Esophagus squamous epithelium (tissue), 5 donors: ENCODE measurements at regions of chr15 and their contacts with region 1.

Region 1: DNA sequence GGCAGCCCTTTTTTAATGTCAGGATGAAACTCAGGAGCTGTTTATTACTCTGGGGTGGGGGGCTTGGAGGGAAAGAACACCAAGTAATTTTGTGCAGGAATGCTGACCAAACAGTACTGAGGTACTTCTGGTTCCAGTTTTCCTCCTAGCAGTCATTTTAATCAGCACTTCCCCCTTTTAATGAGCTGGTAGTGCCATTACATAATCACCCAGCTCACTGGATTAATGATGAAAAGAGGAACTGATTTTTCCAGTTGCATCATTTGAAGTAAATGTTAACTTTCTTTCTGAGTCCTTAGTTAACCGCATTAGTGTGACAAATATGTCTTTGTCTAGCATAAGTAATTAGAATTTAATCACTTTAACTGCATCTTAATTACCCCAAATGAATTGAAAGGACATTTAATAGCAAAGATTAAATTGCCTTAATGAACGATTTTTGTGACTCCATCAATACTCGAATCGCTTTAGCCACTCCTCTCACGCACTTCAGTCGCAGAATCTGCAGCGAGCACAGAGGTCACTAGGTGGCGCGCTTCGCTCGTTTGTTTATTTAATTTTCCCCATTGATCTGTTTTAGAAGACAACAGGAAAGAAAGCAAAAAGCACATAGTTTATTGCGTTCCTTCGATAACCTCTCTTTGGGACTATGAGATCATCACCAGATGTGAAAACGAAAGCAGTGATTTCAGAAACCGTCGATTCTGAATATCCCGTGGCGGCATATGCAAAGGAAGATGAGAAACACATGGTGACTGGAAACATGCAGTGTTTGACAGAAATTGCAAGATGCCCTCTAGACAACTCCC is 9.8 kb downstream of the ONECUT1 start:
- DNase-seq: no peak
- H3K4me3 ChIP-seq: peak overlapping the region in 1 of 4 donors; percentile 44
- H3K27ac ChIP-seq: no peak overlapping the region
- H3K4me1 ChIP-seq: peaks cover 7 to 39% (median 9%) of the 10 kb centered on the region in 3 donors
- H3K27me3 ChIP-seq: peaks cover 10 to 98% (median 27%) of the 10 kb centered on the region in 4 donors
- CTCF ChIP-seq: peak; percentile 65 to 82 (median 72)
- POLR2A ChIP-seq: no peak

Region 2: GRCh38 chr15:52699457-52699856 is 80.9 kb before region 1 on chr15:
- intact Hi-C with region 1: no loop called
- DNase-seq: no peak
- H3K4me3 ChIP-seq: no peak overlapping the region
- H3K27ac ChIP-seq: no peak overlapping the region
- H3K4me1 ChIP-seq: no peaks in the 10 kb centered on the region
- H3K27me3 ChIP-seq: no peaks in the 10 kb centered on the region
- CTCF ChIP-seq: no peak
- POLR2A ChIP-seq: no peak

Region 3: DNA sequence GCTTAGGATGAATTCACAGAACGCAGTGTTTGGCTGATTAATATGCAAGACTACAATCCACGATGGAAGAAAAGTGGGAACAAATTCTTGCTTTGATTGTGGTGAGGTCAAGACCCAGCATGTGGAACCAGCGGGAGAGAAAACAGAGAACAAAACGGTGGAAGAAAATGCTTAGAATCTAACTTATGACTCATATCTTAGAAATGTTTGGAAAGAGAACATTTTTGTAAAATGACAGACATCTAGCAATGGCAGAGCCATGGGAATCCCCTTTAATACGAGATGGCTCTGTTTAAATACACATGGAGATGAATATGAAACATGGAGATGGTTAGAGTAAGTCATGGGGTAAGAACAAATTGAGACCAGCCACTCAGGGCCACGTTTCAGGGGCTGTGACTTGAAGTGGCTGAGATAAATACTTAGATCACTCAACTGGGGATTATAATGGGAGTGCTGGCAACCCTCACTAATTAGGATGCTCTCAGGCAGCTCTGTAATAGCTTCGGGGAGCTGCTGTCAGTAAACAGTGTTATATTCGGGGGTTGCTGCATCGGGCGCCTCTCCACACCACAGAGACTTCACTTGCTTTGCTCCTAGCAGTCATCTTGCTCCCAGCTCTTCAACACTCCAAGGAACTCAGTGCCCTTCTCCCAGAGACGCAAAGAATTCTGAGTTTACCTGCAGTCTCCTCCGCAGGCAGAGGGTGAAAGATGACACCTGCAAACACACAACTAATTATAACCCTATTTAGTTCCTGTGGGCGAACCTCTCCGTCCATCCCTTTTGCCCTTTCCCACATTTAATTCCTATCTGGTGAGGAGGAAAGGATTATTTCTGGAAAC is 77.8 kb after region 1 on chr15:
- intact Hi-C with region 1: no loop called
- DNase-seq: no peak
- H3K4me3 ChIP-seq: no peak overlapping the region
- H3K27ac ChIP-seq: no peak overlapping the region
- H3K4me1 ChIP-seq: no peaks in the 10 kb centered on the region
- H3K27me3 ChIP-seq: peaks cover 0 to 35% (median 0%) of the 10 kb centered on the region in 4 donors
- CTCF ChIP-seq: no peak
- POLR2A ChIP-seq: no peak

Region 4: DNA sequence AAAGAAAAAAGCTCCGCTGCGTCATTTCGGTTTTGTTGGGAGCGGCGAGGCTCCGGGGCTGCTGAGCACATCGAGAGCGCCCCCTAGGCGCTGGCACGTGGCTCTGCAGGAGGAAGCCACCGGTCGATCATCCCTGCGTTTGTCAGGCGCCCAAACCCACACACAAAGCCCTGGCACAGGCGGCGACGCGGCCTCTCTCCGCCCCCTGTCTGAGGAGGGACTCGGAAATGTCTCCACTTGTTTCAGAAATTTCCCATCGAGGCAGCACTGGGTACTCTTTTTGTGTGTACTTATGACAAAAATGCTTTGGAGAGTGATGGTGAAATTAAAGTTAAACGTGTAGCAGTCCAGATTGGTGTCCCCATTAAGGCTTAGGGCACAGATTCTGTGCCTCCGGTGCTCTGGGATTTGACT is 417.1 kb after region 1 on chr15:
- intact Hi-C with region 1: loop called (anchors 5 kb)
- DNase-seq: no peak
- H3K4me3 ChIP-seq: no peak overlapping the region
- H3K27ac ChIP-seq: no peak overlapping the region
- H3K4me1 ChIP-seq: peaks cover 0 to 9% (median 0%) of the 10 kb centered on the region in 3 donors
- H3K27me3 ChIP-seq: peaks cover 0 to 18% (median 0%) of the 10 kb centered on the region in 4 donors
- CTCF ChIP-seq: peak; percentile 46 to 72 (median 62)
- POLR2A ChIP-seq: no peak

Region 5: GRCh38 chr15:53716909-53717876 is 936.8 kb after region 1 on chr15:
- intact Hi-C with region 1: loop called (anchors 10 kb)
- DNase-seq: no peak
- H3K4me3 ChIP-seq: no peak overlapping the region
- H3K27ac ChIP-seq: no peak overlapping the region
- H3K4me1 ChIP-seq: no peaks in the 10 kb centered on the region
- H3K27me3 ChIP-seq: no peaks in the 10 kb centered on the region
- CTCF ChIP-seq: peak in 1 of 6 experiments; percentile 31
- POLR2A ChIP-seq: no peak